Naive thymus-derived CD4-positive, alpha-beta T cell (primary cell): ENCODE measurements at regions of chr3 and their contacts with region 1.

Region 1: GRCh38 chr3:177359593-177360357 is 162.5 kb upstream of the TBL1XR1 start:
- DNase-seq: peak; percentile 95 to 98 (median 96)
- ATAC-seq: peak; percentile 92
- H3K4me3 ChIP-seq: peak overlapping the region; percentile 75
- H3K4me3 Mint-ChIP-seq: peak overlapping the region; percentile 77 to 98 (median 94)
- H3K27ac ChIP-seq: peak overlapping the region; percentile 90
- H3K27ac Mint-ChIP-seq: peak overlapping the region; percentile 96 to 100 (median 98)
- H3K4me1 ChIP-seq: peaks cover 31 to 34% of the 10 kb centered on the region in 2 donors
- H3K4me1 Mint-ChIP-seq: peaks cover 28 to 63% (median 54%) of the 10 kb centered on the region in 7 donors
- H3K27me3 ChIP-seq: no peaks in the 10 kb centered on the region
- H3K27me3 Mint-ChIP-seq: peaks cover 0 to 2% (median 0%) of the 10 kb centered on the region in 5 donors

Region 2: DNA sequence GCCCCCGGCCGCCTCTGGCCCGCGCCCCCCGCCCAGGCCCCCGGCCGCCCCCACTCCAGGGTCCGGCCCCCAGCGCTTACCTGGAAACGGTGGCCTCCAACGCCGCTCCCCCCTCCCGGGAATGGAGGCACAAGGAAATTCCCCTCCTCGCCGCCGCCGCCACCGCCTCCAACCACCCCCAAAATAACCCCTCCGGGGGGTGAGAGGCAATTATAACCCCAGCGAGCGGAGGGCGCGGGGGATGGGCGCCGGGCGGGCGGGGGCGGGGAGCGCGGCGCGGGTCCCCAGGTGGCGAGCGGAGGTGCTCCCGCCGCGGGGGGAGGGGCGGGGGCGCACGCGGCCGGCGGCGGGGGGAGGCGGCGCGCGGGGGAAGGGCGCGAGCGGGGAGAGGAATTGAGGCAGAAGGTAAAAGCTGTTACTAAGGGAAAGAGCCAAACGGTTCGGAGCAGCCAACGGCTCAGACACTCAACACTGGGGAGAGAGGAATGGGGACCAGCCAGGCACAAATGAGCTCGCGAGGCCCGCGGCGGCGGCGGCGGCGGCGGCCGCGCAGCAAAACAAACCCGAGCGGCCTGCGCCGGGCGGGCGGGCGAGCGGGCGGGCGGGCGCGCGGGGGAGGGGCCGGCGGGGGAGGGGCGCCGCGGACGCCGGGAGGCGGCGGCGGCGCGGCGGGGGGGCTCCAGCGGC is 162.6 kb before region 1 on chr3 and contains the start of gene TBL1XR1:
- CTCF ChIA-PET with region 1: interaction called, 36 read pairs
- POLR2A ChIA-PET with region 1: interaction called, 204 read pairs
- intact Hi-C with region 1: loop called (anchors 1 kb)
- DNase-seq: peak; percentile 78 to 93 (median 90)
- ATAC-seq: peak; percentile 81
- H3K4me3 ChIP-seq: peak within 1 kb of the TSS; percentile 91
- H3K4me3 Mint-ChIP-seq: peak within 1 kb of the TSS; percentile 93 to 99 (median 98)
- H3K27ac ChIP-seq: peak within 1 kb of the TSS; percentile 94
- H3K27ac Mint-ChIP-seq: peak within 1 kb of the TSS; percentile 94 to 100 (median 98)
- H3K4me1 ChIP-seq: peaks cover 40 to 48% of the 10 kb centered on the region in 2 donors
- H3K4me1 Mint-ChIP-seq: peaks cover 35 to 68% (median 64%) of the 10 kb centered on the region in 7 donors
- H3K27me3 ChIP-seq: no peaks in the 10 kb centered on the region
- H3K27me3 Mint-ChIP-seq: peaks cover 0 to 2% (median 0%) of the 10 kb centered on the region in 5 donors
- total RNA-seq, gene TBL1XR1: 98.9 to 173 (median 133) TPM

Region 3: GRCh38 chr3:177211503-177212277 is 148.1 kb before region 1 on chr3:
- CTCF ChIA-PET with region 1: no interaction called
- POLR2A ChIA-PET with region 1: no interaction called
- intact Hi-C with region 1: no loop called
- DNase-seq: peak in 1 of 9 donors; percentile 36
- ATAC-seq: no peak
- H3K4me3 ChIP-seq: no peak overlapping the region
- H3K4me3 Mint-ChIP-seq: no peak overlapping the region
- H3K27ac ChIP-seq: no peak overlapping the region
- H3K27ac Mint-ChIP-seq: peak overlapping the region in 6 of 9 donors; percentile 8 to 79 (median 38)
- H3K4me1 ChIP-seq: peaks cover 0 to 5% of the 10 kb centered on the region in 2 donors
- H3K4me1 Mint-ChIP-seq: peaks cover 0 to 14% (median 10%) of the 10 kb centered on the region in 7 donors
- H3K27me3 ChIP-seq: no peaks in the 10 kb centered on the region
- H3K27me3 Mint-ChIP-seq: no peaks in the 10 kb centered on the region

Region 4: GRCh38 chr3:177330779-177331178 is 29.0 kb before region 1 on chr3:
- CTCF ChIA-PET with region 1: no interaction called
- POLR2A ChIA-PET with region 1: no interaction called
- intact Hi-C with region 1: no loop called
- DNase-seq: no peak
- ATAC-seq: no peak
- H3K4me3 ChIP-seq: no peak overlapping the region
- H3K4me3 Mint-ChIP-seq: no peak overlapping the region
- H3K27ac ChIP-seq: no peak overlapping the region
- H3K27ac Mint-ChIP-seq: no peak overlapping the region
- H3K4me1 ChIP-seq: no peaks in the 10 kb centered on the region
- H3K4me1 Mint-ChIP-seq: peaks cover 0 to 8% (median 0%) of the 10 kb centered on the region in 7 donors
- H3K27me3 ChIP-seq: no peaks in the 10 kb centered on the region
- H3K27me3 Mint-ChIP-seq: no peaks in the 10 kb centered on the region

Region 5: GRCh38 chr3:177345049-177345972 is 14.5 kb before region 1 on chr3:
- CTCF ChIA-PET with region 1: no interaction called
- POLR2A ChIA-PET with region 1: interaction called, 3 read pairs
- intact Hi-C with region 1: loop called (anchors 1 kb)
- DNase-seq: peak in 2 of 9 donors; percentile 38 to 64
- ATAC-seq: peak; percentile 94
- H3K4me3 ChIP-seq: no peak overlapping the region
- H3K4me3 Mint-ChIP-seq: peak overlapping the region in 6 of 10 donors; percentile 21 to 54 (median 38)
- H3K27ac ChIP-seq: no peak overlapping the region
- H3K27ac Mint-ChIP-seq: peak overlapping the region in 5 of 9 donors; percentile 5 to 89 (median 23)
- H3K4me1 ChIP-seq: peaks cover 6 to 11% of the 10 kb centered on the region in 2 donors
- H3K4me1 Mint-ChIP-seq: peaks cover 7 to 34% (median 18%) of the 10 kb centered on the region in 7 donors
- H3K27me3 ChIP-seq: no peaks in the 10 kb centered on the region
- H3K27me3 Mint-ChIP-seq: no peaks in the 10 kb centered on the region

Region 6: DNA sequence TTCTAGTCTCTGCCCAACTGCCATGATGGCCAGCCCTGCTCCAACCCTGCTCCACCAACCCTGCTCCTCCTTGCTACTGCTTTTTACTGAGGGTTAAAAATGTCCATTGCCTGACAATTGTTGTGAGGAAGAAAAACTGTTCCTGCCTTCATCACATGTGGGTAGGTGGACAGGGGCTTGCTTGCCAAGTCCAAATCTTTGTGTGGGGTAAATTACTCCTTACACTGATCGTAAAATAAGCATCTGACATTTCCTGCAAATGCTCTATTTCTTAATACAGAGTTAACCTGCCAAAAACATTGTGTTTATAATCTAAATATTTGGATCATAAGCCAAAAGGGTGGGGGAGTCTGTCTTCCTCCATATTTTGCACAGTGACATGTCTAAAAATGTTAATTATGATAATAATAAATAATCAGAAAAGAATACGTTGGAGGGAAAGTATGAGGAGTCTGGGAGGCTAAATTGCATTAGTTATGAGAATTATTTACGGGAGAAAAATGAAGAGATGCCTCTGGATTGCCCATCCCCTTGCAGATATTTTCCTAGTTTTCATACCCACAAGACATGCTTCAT is 80.0 kb after region 1 on chr3:
- CTCF ChIA-PET with region 1: no interaction called
- POLR2A ChIA-PET with region 1: no interaction called
- intact Hi-C with region 1: no loop called
- DNase-seq: no peak
- ATAC-seq: no peak
- H3K4me3 ChIP-seq: no peak overlapping the region
- H3K4me3 Mint-ChIP-seq: no peak overlapping the region
- H3K27ac ChIP-seq: no peak overlapping the region
- H3K27ac Mint-ChIP-seq: no peak overlapping the region
- H3K4me1 ChIP-seq: no peaks in the 10 kb centered on the region
- H3K4me1 Mint-ChIP-seq: peaks cover 0 to 3% (median 0%) of the 10 kb centered on the region in 7 donors
- H3K27me3 ChIP-seq: no peaks in the 10 kb centered on the region
- H3K27me3 Mint-ChIP-seq: no peaks in the 10 kb centered on the region

Region 7: GRCh38 chr3:177554895-177555759 is 195.4 kb after region 1 on chr3:
- CTCF ChIA-PET with region 1: interaction called, 4 read pairs
- POLR2A ChIA-PET with region 1: interaction called, 3 read pairs
- intact Hi-C with region 1: loop called in 1 of 2 experiments (anchors 5 kb)
- DNase-seq: no peak
- ATAC-seq: peak; percentile 18
- H3K4me3 ChIP-seq: no peak overlapping the region
- H3K4me3 Mint-ChIP-seq: peak overlapping the region in 3 of 10 donors; percentile 7 to 43 (median 8)
- H3K27ac ChIP-seq: no peak overlapping the region
- H3K27ac Mint-ChIP-seq: peak overlapping the region in 5 of 9 donors; percentile 7 to 53 (median 48)
- H3K4me1 ChIP-seq: peaks cover 9 to 28% of the 10 kb centered on the region in 2 donors
- H3K4me1 Mint-ChIP-seq: peaks cover 16 to 72% (median 57%) of the 10 kb centered on the region in 7 donors
- H3K27me3 ChIP-seq: no peaks in the 10 kb centered on the region
- H3K27me3 Mint-ChIP-seq: no peaks in the 10 kb centered on the region

Region 8: GRCh38 chr3:177944228-177944661 is 584.5 kb after region 1 on chr3:
- CTCF ChIA-PET with region 1: no interaction called
- POLR2A ChIA-PET with region 1: no interaction called
- intact Hi-C with region 1: loop called in 1 of 2 experiments (anchors 10 kb)
- DNase-seq: peak in 7 of 9 donors; percentile 43 to 76 (median 69)
- ATAC-seq: peak; percentile 81
- H3K4me3 ChIP-seq: no peak overlapping the region
- H3K4me3 Mint-ChIP-seq: peak overlapping the region; percentile 3 to 83 (median 58)
- H3K27ac ChIP-seq: peak overlapping the region; percentile 55
- H3K27ac Mint-ChIP-seq: peak overlapping the region; percentile 4 to 92 (median 86)
- H3K4me1 ChIP-seq: peaks cover 19 to 29% of the 10 kb centered on the region in 2 donors
- H3K4me1 Mint-ChIP-seq: peaks cover 20 to 47% (median 38%) of the 10 kb centered on the region in 7 donors
- H3K27me3 ChIP-seq: no peaks in the 10 kb centered on the region
- H3K27me3 Mint-ChIP-seq: no peaks in the 10 kb centered on the region

Region 9: DNA sequence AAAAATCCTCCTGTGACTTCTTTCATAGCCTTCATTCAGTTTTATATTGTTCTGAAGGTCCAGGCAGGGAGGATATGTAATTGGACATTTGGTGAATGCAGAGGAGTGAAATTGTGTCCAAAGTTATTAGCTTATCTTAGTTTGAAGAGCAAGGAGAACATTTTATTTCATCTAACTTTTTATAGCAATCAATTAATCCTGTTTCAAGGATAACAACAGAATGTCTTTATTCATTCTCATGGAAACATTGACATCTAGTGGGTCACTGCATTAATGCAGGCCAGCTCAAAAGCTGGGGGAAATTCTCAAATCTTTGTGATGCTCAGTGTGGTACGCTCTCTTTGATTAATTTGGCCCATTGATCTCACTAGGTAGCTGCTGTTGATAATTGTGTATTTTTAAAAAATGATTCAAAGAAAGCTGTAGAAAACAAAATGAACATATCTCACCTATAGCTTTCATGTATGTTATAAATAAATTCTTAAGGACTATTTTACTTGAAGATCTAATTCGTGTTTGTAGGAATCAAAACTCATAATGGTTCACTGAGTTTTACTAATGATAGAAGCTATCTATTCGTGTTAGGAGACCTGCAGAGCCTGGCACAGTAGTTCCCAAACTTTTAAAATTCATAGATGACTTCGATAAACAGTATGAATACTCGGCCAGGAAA is 1025.6 kb after region 1 on chr3:
- CTCF ChIA-PET with region 1: no interaction called
- POLR2A ChIA-PET with region 1: no interaction called
- intact Hi-C with region 1: loop called in 1 of 2 experiments (anchors 1 kb)
- DNase-seq: peak in 5 of 9 donors; percentile 23 to 44 (median 41)
- ATAC-seq: peak; percentile 56
- H3K4me3 ChIP-seq: no peak overlapping the region
- H3K4me3 Mint-ChIP-seq: no peak overlapping the region
- H3K27ac ChIP-seq: no peak overlapping the region
- H3K27ac Mint-ChIP-seq: peak overlapping the region in 1 of 9 donors; percentile 4
- H3K4me1 ChIP-seq: no peaks in the 10 kb centered on the region
- H3K4me1 Mint-ChIP-seq: no peaks in the 10 kb centered on the region
- H3K27me3 ChIP-seq: no peaks in the 10 kb centered on the region
- H3K27me3 Mint-ChIP-seq: peaks cover 0 to 12% (median 4%) of the 10 kb centered on the region in 5 donors